PC-3 (cell line): ENCODE measurements at regions of chr4 and their contacts with region 1.

Region 1: DNA sequence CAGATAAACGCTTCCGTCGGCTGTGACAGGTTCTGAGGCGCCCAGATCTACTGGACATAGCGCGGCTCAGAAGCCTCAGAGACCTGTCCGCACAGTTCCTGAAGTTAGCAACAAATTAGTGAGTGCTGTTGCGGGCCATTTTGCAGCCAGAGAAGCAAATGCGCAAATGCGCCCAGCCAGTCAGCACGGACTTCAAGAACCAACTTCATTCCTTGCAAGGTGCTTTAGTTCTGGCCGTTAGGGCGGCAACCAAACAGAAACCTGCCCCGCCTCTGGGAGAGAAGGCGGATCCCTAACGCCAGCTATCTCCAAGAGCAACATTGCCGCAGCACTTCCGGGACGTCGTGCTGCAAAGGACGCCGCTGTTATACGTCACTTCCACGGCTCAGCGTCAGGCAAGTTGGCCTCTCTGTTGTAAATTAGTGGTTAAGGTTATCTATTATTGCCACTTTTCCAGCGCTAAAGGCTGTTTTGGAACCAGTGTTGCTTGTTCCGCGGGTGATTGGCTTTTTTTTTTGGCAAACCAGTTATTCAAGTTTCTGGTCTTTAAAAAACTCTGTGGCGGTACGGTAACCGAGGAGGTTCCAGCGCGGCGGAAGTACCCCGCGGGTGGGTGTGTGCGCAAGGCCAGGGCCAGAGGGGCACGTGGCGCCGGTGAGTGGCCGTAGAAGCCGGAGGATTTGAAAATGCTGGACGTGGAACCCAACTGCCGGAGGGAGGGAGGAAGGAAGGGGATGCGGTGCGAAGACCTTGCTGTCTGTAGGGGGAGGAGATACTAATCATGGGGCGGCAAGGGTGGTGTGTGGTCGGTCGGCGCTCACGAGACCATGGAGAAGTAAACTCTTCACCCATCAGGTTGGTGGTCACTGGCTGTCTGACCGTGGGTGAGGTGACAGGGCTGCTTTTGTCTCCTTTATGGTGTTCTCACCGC is at the start of gene GAR1:
- DNase-seq: peak; percentile 93
- ATAC-seq: peak; percentile 98
- H3K4me3 ChIP-seq: peak within 1 kb of the TSS; percentile 98
- H3K27ac ChIP-seq: peak within 1 kb of the TSS; percentile 79
- H3K4me1 ChIP-seq: peaks cover 8% of the 10 kb centered on the region; the same call in 1 of the 2 replicates
- H3K27me3 ChIP-seq: no peaks in the 10 kb centered on the region
- CTCF ChIP-seq: no peak
- total RNA-seq, gene GAR1: 15.9 and 26.0 TPM in 2 replicates

Region 2: GRCh38 chr4:108650212-108651013 is 1165.0 kb before region 1 on chr4 and contains the start of gene OSTC:
- CTCF ChIA-PET with region 1: no interaction called
- POLR2A ChIA-PET with region 1: no interaction called
- intact Hi-C with region 1: no loop called
- DNase-seq: peak; percentile 89
- ATAC-seq: peak; percentile 80
- H3K4me3 ChIP-seq: peak within 1 kb of the TSS; percentile 95
- H3K27ac ChIP-seq: peak within 1 kb of the TSS; percentile 46
- H3K4me1 ChIP-seq: peaks cover 14% of the 10 kb centered on the region
- H3K27me3 ChIP-seq: no peaks in the 10 kb centered on the region
- CTCF ChIP-seq: no peak
- total RNA-seq, gene OSTC: 47.2 and 49.1 TPM in 2 replicates

Region 3: GRCh38 chr4:109729718-109730618 is 85.4 kb before region 1 on chr4 and contains the start of gene PLA2G12A:
- CTCF ChIA-PET with region 1: no interaction called
- POLR2A ChIA-PET with region 1: no interaction called
- intact Hi-C with region 1: loop called (anchors 2 kb)
- DNase-seq: peak; percentile 87
- ATAC-seq: peak; percentile 72
- H3K4me3 ChIP-seq: peak within 1 kb of the TSS; percentile 99
- H3K27ac ChIP-seq: peak within 1 kb of the TSS; percentile 44
- H3K4me1 ChIP-seq: peaks cover 14% of the 10 kb centered on the region
- H3K27me3 ChIP-seq: no peaks in the 10 kb centered on the region
- CTCF ChIP-seq: no peak
- total RNA-seq, gene PLA2G12A: 51.6 and 53.3 TPM in 2 replicates

Region 4: DNA sequence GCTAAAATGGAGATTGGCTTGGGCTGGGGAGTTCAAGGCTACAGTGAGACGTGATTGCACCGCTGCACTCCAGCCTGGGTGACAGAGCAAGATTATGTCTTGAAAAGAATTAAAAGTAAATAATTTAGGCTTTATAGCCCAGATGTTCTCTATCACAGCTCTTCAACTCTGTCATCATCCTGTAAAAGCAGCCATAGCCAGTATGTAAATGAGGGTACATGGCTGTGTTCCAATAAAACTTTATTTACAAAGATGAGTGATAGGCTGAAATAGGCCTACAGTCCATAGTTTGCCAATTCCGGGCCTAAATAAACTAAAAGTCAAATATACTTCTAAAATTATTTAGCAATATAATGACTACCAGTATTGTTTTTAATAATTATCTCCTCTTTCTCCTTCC is 21.6 kb after region 1 on chr4:
- CTCF ChIA-PET with region 1: no interaction called
- POLR2A ChIA-PET with region 1: no interaction called
- intact Hi-C with region 1: no loop called
- DNase-seq: no peak
- ATAC-seq: no peak
- H3K4me3 ChIP-seq: no peak overlapping the region
- H3K27ac ChIP-seq: no peak overlapping the region
- H3K4me1 ChIP-seq: no peaks in the 10 kb centered on the region
- H3K27me3 ChIP-seq: no peaks in the 10 kb centered on the region
- CTCF ChIP-seq: no peak